ENCODE measurements at regions of chr20 and their contacts with region 1.

Region 1: GRCh38 chr20:7094438-7094997 is 327.0 kb downstream of the BMP2 start:
- ATAC-seq: no peak
- H3K4me3 ChIP-seq: no peak overlapping the region
- H3K27ac ChIP-seq: no peak overlapping the region
- H3K4me1 ChIP-seq: peaks cover 0 to 4% of the 10 kb centered on the region in 2 donors

Region 2: GRCh38 chr20:6828794-6829423 is 265.6 kb before region 1 on chr20:
- in situ Hi-C with region 1: loop called in 1 of 9 experiments (anchors 25 kb)
- ATAC-seq: peak in 7 of 8 experiments; percentile 39 to 99 (median 73)
- H3K4me3 ChIP-seq: no peak overlapping the region
- H3K27ac ChIP-seq: no peak overlapping the region
- H3K4me1 ChIP-seq: no peaks in the 10 kb centered on the region

Region 3: DNA sequence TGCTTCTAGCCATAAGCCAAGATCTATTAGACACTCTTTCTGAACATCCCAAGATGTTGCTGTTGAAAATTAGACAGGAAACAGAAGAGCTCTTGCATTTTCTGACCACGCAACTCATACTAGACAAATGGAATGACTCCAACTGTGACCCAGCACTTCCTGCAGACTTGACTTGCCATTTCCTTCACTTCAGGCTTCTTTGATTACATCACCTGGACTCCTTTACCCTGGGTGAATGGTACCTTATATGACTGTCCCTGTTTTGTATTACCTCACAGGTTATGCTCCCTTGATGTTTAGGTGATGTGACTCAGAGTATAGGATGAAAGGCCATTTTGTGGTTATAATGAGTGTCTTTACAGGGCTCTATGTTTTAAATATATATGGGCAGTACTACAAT is 90.9 kb before region 1 on chr20:
- in situ Hi-C with region 1: no loop called
- ATAC-seq: no peak
- H3K4me3 ChIP-seq: no peak overlapping the region
- H3K27ac ChIP-seq: no peak overlapping the region
- H3K4me1 ChIP-seq: no peaks in the 10 kb centered on the region

Region 4: DNA sequence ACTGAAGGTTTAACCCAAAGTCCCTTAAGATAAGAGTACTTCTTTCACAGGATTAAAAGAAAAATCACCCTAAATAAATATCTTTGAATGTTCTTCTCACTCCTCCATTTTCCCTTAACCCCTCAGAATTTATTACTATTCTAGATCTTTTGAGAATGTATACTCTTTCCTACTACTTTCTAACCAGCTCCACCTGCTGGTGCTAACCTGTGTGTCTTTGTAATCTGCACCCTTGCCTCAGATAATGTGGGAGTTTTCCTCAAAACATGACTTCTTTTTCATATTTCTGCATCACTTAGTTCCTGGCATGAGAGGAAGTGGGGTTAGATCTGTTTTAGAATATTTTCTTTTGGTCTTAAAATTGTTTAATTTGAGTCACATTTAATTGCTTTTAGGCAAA is 67.2 kb after region 1 on chr20:
- in situ Hi-C with region 1: no loop called
- ATAC-seq: peak in 2 of 8 experiments; percentile 49 to 61
- H3K4me3 ChIP-seq: no peak overlapping the region
- H3K27ac ChIP-seq: no peak overlapping the region
- H3K4me1 ChIP-seq: no peaks in the 10 kb centered on the region